Calu3 (cell line): ENCODE measurements at regions of chrX and their contacts with region 1.

Region 1: DNA sequence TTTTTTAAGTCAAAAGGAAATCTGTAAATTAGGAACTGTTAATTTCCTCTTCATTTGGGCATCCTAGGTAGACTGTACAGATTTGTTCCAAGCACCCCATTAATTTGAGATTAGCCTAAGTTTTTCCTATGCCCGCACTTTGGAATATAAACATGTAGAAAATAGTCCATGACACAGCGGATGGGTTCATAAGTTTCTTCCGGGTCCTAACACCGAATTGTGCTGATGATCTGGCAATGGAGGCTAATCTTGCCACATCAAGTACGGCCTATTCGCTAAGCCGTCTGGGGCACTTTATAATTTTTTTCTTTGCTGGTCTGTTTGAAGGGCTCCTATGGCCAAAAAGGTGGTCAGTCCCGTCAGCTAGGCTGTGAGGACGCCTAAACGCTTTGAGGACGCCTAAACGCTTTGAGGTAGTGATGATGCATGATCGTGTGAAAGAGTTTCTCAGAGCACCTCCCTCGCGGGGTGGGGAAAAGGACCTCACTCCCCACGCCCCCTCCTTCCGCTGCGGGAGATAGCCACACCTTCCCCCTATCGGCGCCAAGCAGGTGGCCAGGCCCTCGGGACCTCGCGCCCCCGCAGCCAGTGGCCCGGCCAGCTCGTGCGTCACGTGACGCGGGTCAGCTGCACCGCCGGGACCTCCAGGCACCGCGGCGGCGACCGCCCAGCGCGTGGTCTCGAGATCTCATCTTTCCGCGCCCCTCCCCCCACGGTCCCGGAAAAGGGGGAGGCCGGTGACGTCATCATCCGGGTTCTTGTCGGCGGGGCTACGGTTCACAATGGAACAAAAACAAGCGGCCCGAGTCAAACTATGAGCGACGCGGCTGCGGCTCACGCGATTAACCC is 977 bp upstream of the USP9X start:
- DNase-seq: peak; percentile 98
- H3K4me3 Mint-ChIP-seq: peak overlapping the region; percentile 89
- H3K27ac Mint-ChIP-seq: peak overlapping the region; percentile 98
- H3K4me1 Mint-ChIP-seq: peaks cover 12% of the 10 kb centered on the region
- H3K27me3 Mint-ChIP-seq: no peaks in the 10 kb centered on the region
- CTCF ChIP-seq: no peak

Region 2: GRCh38 chrX:40933132-40933705 is 151.0 kb before region 1 on chrX:
- CTCF ChIA-PET with region 1: no interaction called
- intact Hi-C with region 1: loop called (anchors 5 kb)
- DNase-seq: no peak
- H3K4me3 Mint-ChIP-seq: peak overlapping the region; percentile 64
- H3K27ac Mint-ChIP-seq: peak overlapping the region; percentile 79
- H3K4me1 Mint-ChIP-seq: peaks cover 19% of the 10 kb centered on the region
- H3K27me3 Mint-ChIP-seq: no peaks in the 10 kb centered on the region
- CTCF ChIP-seq: no peak

Region 3: GRCh38 chrX:40964633-40965586 is 119.4 kb before region 1 on chrX:
- CTCF ChIA-PET with region 1: no interaction called
- intact Hi-C with region 1: no loop called
- DNase-seq: peak; percentile 7
- H3K4me3 Mint-ChIP-seq: no peak overlapping the region
- H3K27ac Mint-ChIP-seq: no peak overlapping the region
- H3K4me1 Mint-ChIP-seq: no peaks in the 10 kb centered on the region
- H3K27me3 Mint-ChIP-seq: no peaks in the 10 kb centered on the region
- CTCF ChIP-seq: no peak

Region 4: GRCh38 chrX:41010188-41010846 is 74.0 kb before region 1 on chrX:
- CTCF ChIA-PET with region 1: interaction called, 4 read pairs
- intact Hi-C with region 1: loop called (anchors 5 kb)
- DNase-seq: peak; percentile 83
- H3K4me3 Mint-ChIP-seq: peak overlapping the region; percentile 58
- H3K27ac Mint-ChIP-seq: peak overlapping the region; percentile 86
- H3K4me1 Mint-ChIP-seq: peaks cover 20% of the 10 kb centered on the region
- H3K27me3 Mint-ChIP-seq: no peaks in the 10 kb centered on the region
- CTCF ChIP-seq: no peak

Region 5: GRCh38 chrX:41027431-41027831 is 56.8 kb before region 1 on chrX:
- CTCF ChIA-PET with region 1: no interaction called
- intact Hi-C with region 1: loop called (anchors 5 kb)
- DNase-seq: peak; percentile 38
- H3K4me3 Mint-ChIP-seq: no peak overlapping the region
- H3K27ac Mint-ChIP-seq: peak overlapping the region; percentile 65
- H3K4me1 Mint-ChIP-seq: no peaks in the 10 kb centered on the region
- H3K27me3 Mint-ChIP-seq: no peaks in the 10 kb centered on the region
- CTCF ChIP-seq: no peak

Region 6: DNA sequence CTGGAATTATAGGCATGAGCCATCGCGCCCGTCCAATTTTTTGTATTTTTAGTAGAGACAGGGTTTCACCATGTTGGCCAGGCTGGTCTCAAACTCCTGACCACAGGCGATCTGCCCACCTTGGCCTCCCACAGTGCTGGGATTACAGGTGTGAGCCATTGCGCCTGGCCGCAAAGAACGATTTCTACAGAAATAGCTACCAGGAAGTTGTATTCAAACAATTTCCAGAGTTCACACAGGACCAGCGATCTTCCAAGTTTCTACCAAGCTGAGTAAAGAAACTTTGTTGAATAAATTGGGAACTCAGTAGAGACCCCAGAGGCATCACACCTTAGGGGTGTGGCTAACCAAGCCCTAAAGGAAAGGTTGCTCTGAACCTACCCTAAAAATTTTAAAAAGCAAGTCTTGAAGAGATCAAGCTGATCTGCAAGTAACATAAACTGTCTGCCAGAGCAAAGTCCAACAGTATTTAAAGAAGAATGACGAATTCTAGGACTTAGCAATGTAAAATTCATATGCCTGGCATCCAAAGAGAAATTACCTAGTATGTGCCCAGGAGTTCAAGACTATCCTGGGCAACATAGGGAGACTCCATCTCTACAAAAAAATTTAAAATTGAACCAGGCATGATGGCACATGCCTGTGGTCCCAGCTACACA is 47.5 kb before region 1 on chrX:
- CTCF ChIA-PET with region 1: no interaction called
- intact Hi-C with region 1: loop called (anchors 5 kb)
- DNase-seq: peak; percentile 33
- H3K4me3 Mint-ChIP-seq: no peak overlapping the region
- H3K27ac Mint-ChIP-seq: peak overlapping the region; percentile 47
- H3K4me1 Mint-ChIP-seq: no peaks in the 10 kb centered on the region
- H3K27me3 Mint-ChIP-seq: no peaks in the 10 kb centered on the region
- CTCF ChIP-seq: no peak